Mammary epithelial cell (primary cell): ENCODE measurements at regions of chr6 and their contacts with region 1.

Region 1: GRCh38 chr6:36623547-36624459 is 29.6 kb downstream of the SRSF3 start:
- DNase-seq: peak; percentile 82
- H3K4me3 ChIP-seq: no peak overlapping the region
- H3K27ac ChIP-seq: no peak overlapping the region
- H3K4me1 ChIP-seq: peaks cover 3% of the 10 kb centered on the region
- H3K27me3 ChIP-seq: no peaks in the 10 kb centered on the region
- CTCF ChIP-seq: peak; percentile 94 to 98

Region 2: GRCh38 chr6:36177166-36177565 is 446.6 kb before region 1 on chr6:
- CTCF ChIA-PET with region 1: no interaction called
- dilution Hi-C with region 1: no loop called
- in situ Hi-C with region 1: no loop called
- intact Hi-C with region 1: no loop called
- DNase-seq: peak; percentile 12
- H3K4me3 ChIP-seq: no peak overlapping the region
- H3K27ac ChIP-seq: no peak overlapping the region
- H3K4me1 ChIP-seq: no peaks in the 10 kb centered on the region
- H3K27me3 ChIP-seq: no peaks in the 10 kb centered on the region
- CTCF ChIP-seq: no peak

Region 3: GRCh38 chr6:36578431-36578830 is 45.4 kb before region 1 on chr6:
- CTCF ChIA-PET with region 1: no interaction called
- dilution Hi-C with region 1: no loop called
- in situ Hi-C with region 1: no loop called
- intact Hi-C with region 1: no loop called
- DNase-seq: no peak
- H3K4me3 ChIP-seq: no peak overlapping the region
- H3K27ac ChIP-seq: no peak overlapping the region
- H3K4me1 ChIP-seq: peaks cover 32% of the 10 kb centered on the region
- H3K27me3 ChIP-seq: no peaks in the 10 kb centered on the region
- CTCF ChIP-seq: no peak

Region 4: DNA sequence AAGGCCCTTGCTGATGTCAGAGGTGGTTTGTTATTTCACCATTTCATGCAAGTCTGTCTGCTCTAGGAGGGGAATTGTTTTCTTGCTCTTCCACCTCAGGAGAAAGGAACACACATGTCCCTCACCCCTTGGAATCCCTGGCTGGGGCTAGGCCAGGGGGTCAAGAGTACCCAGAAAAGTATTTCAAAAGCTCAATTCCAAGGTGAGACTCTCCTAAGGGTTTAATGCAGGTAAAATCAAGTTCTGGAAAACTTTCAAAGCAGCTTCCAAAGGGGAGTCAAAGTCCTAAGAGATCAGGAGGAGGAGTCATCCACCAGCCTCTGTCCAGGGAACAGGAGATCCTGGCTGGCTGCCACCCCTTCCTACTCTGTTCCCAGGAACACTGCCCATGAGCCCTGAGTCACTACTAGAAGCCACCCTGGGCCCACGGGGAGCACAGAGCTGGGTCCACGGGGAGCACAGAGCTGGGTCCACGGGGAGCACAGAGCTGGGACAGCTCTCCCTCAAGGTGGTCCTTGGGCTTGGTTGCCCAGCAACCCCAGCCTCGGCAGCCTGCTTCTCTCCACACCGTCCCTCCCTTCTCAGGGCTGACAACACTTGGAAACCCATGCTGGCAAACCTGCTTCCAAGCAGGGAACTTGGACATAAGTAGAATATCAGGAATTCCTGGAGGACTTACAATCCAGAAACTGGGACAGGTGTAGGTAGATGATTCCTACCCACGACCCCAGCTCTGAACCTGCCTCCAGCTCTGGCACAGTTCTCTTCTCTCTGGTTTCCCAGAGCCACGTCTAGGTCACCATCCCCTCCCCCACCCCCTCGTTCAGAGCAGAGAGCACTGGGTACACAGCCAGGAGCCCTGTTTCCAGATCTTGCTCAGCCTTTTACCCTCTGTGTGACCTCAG is 19.4 kb after region 1 on chr6:
- CTCF ChIA-PET with region 1: no interaction called
- dilution Hi-C with region 1: no loop called
- in situ Hi-C with region 1: no loop called
- intact Hi-C with region 1: loop called (anchors 2 kb)
- DNase-seq: peak; percentile 77
- H3K4me3 ChIP-seq: no peak overlapping the region
- H3K27ac ChIP-seq: no peak overlapping the region
- H3K4me1 ChIP-seq: peaks cover 21% of the 10 kb centered on the region
- H3K27me3 ChIP-seq: no peaks in the 10 kb centered on the region
- CTCF ChIP-seq: no peak

Region 5: DNA sequence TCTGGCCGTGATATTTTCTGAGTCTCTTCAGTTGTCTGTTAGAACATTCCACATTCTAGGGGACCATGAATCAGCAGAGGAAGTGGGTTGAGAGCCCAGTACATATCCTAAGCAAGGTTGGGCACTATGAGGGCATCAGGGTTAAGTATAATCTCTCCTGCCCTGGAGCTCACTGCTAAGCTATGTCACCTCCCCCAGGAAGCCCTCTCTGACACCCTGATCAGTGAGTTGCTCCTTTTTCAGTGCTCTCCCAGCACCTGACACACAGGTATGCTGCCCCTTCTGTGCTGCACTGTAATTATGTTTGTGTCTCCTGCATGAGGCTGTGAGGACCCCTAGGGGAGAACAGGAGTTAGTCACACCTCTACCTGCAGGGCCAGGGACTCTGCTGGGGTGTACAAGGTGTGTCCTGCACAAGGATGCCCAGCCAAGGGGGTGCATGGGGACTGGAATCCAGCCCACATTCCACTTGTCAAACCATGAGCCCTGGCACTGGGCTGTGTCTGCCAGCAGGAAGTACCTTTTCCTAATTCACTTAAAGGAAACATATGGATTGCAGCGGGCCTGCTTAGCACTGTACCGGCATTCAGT is 77.7 kb after region 1 on chr6:
- CTCF ChIA-PET with region 1: no interaction called
- dilution Hi-C with region 1: no loop called
- in situ Hi-C with region 1: no loop called
- intact Hi-C with region 1: loop called (anchors 1 kb)
- DNase-seq: no peak
- H3K4me3 ChIP-seq: no peak overlapping the region
- H3K27ac ChIP-seq: no peak overlapping the region
- H3K4me1 ChIP-seq: peaks cover 15% of the 10 kb centered on the region
- H3K27me3 ChIP-seq: no peaks in the 10 kb centered on the region
- CTCF ChIP-seq: peak; percentile 32 to 42

Region 6: GRCh38 chr6:36716476-36717093 is 92.8 kb after region 1 on chr6:
- CTCF ChIA-PET with region 1: no interaction called
- dilution Hi-C with region 1: loop called (anchors 5 kb)
- in situ Hi-C with region 1: loop called in 1 of 2 experiments (anchors 5 kb)
- intact Hi-C with region 1: no loop called
- DNase-seq: no peak
- H3K4me3 ChIP-seq: no peak overlapping the region
- H3K27ac ChIP-seq: no peak overlapping the region
- H3K4me1 ChIP-seq: no peaks in the 10 kb centered on the region
- H3K27me3 ChIP-seq: no peaks in the 10 kb centered on the region
- CTCF ChIP-seq: no peak

Region 7: GRCh38 chr6:36724514-36725390 is 100.9 kb after region 1 on chr6:
- CTCF ChIA-PET with region 1: interaction called, 5 read pairs
- dilution Hi-C with region 1: no loop called
- in situ Hi-C with region 1: loop called in 1 of 2 experiments (anchors 5 kb)
- intact Hi-C with region 1: loop called (anchors 1 kb)
- DNase-seq: peak; percentile 63
- H3K4me3 ChIP-seq: no peak overlapping the region
- H3K27ac ChIP-seq: no peak overlapping the region
- H3K4me1 ChIP-seq: peaks cover 18% of the 10 kb centered on the region
- H3K27me3 ChIP-seq: no peaks in the 10 kb centered on the region
- CTCF ChIP-seq: peak; percentile 78 to 80

Region 8: GRCh38 chr6:36827261-36828079 is 203.7 kb after region 1 on chr6:
- CTCF ChIA-PET with region 1: no interaction called
- dilution Hi-C with region 1: no loop called
- in situ Hi-C with region 1: no loop called
- intact Hi-C with region 1: no loop called
- DNase-seq: peak; percentile 70
- H3K4me3 ChIP-seq: no peak overlapping the region
- H3K27ac ChIP-seq: no peak overlapping the region
- H3K4me1 ChIP-seq: peaks cover 16% of the 10 kb centered on the region
- H3K27me3 ChIP-seq: no peaks in the 10 kb centered on the region
- CTCF ChIP-seq: no peak

Region 9: DNA sequence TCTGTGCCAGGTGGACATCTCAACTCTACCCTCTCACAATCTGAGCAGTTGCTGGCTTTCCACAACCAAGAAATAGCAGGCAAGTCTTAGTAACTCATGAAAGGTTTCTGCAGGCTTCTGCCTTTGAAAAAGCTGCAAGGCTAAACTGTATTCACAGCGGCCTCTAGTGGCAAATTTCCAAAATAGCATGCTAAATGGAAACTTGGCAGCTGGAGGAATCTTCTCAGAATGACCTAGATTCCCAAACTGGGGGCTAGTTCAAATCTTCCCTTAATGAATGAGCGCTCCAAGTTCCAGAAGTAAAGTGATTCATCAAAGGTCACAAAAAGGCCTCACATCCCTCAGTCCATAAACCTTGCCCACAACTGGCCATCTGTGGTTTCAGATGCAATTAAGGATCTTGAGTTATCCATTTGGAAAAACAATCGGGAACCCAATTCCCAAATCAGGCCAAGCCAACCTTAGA is 227.4 kb after region 1 on chr6:
- CTCF ChIA-PET with region 1: no interaction called
- dilution Hi-C with region 1: no loop called
- in situ Hi-C with region 1: no loop called
- intact Hi-C with region 1: loop called (anchors 2 kb)
- DNase-seq: peak; percentile 58
- H3K4me3 ChIP-seq: no peak overlapping the region
- H3K27ac ChIP-seq: no peak overlapping the region
- H3K4me1 ChIP-seq: peaks cover 28% of the 10 kb centered on the region
- H3K27me3 ChIP-seq: no peaks in the 10 kb centered on the region
- CTCF ChIP-seq: peak; percentile 83 to 85